KBM-7 (cell line): ENCODE measurements at regions of chr20 and their contacts with region 1.

Region 1: GRCh38 chr20:5933802-5934436 is 16.4 kb downstream of the TRMT6 start:
- DNase-seq: peak; percentile 60

Region 2: DNA sequence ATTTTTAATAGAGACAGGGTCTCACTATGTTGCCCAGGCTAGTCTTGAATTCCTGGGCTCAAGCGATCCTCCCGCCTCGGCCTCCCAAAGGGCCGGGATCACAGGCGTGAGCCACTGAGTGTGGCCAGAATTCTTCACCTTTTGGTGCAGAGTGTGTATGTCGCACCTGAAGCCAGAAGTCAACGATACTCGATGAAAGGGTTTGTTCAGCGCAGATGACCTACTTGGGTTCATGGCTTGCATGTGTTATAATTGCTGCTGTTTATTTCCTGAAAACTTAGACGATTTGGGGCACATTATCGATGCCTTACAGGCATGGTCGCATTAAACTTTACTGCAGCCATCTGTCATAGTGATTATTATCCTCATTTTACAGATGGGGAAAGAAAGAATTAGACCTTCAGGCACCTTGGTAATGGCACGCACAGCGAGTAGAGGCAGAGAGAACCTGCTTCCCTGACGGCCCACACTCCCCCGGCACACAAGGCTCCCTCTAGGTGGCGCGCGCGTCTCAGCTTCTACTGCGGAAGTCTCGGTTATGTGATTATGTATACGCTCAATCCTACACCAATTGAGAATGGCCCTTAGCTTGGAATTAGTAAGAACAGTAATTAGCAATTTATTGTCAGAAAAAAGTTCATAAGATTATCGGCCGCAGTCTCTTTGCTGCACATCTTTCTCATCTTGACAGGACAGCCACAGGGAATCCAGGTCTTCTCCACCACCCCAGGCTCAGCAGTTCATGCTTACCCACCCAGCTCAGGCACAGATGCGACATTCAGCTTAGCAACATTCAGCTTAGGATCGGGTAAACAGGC is 404.4 kb before region 1 on chr20:
- in situ Hi-C with region 1: loop called (anchors 25 kb)
- DNase-seq: peak; percentile 89